ENCODE measurements at regions of chr1 and their contacts with region 1.

Region 1: DNA sequence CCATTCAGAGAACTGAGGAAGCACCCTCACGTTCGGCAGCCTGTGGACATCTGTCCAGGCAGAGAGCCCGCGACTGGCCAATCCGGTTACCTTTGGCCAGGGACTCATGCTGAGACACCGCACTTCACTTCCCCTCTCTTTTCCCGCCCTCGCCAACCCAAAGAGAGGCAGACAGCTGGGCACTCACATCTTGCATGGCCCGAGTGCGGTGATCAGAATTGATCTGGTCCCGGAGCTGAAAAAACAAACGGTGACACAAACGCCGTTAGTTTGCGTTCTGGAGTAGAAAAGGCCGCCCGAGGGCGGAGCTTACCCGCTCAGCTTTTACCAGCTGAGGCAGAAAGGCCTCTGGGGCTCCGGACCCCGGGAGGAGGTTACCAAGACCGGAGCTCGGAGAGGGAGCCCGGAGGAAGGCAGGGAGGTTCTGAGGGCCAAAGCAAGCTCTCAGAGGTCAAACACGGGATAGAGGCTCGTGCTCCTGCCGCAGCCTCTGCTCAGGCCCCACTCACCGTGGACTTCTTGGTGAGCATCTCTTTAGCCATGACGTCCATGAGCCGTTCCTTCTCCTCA is 376 bp downstream of the SF3A3 start:
- DNase-seq: no peak
- ATAC-seq: peak; percentile 48
- H3K4me3 ChIP-seq: peak overlapping the region; percentile 95
- H3K27ac ChIP-seq: peak overlapping the region; percentile 83
- H3K4me1 ChIP-seq: peaks cover 4% of the 10 kb centered on the region; the same call in 1 of the 2 replicates
- H3K27me3 ChIP-seq: no peaks in the 10 kb centered on the region
- CTCF ChIP-seq: no peak
- EP300 ChIP-seq: no peak
- POLR2A ChIP-seq: no peak
- RAD21 ChIP-seq: no peak

Region 2: GRCh38 chr1:37595440-37596319 is 393.8 kb before region 1 on chr1 and contains the start of gene GNL2:
- CTCF ChIA-PET with region 1: no interaction called
- POLR2A ChIA-PET with region 1: no interaction called
- RAD21 ChIA-PET with region 1: no interaction called
- SMC1A ChIA-PET with region 1: no interaction called
- in situ Hi-C with region 1: loop called (anchors 25 kb)
- intact Hi-C with region 1: no loop called
- DNase-seq: peak; percentile 83
- ATAC-seq: peak; percentile 99
- H3K4me3 ChIP-seq: peak within 1 kb of the TSS; percentile 77
- H3K27ac ChIP-seq: peak within 1 kb of the TSS; percentile 84
- H3K4me1 ChIP-seq: peaks cover 7% of the 10 kb centered on the region
- H3K27me3 ChIP-seq: no peaks in the 10 kb centered on the region
- CTCF ChIP-seq: no peak
- EP300 ChIP-seq: no peak
- POLR2A ChIP-seq: peak; percentile 96
- RAD21 ChIP-seq: no peak
- polyA plus RNA-seq, gene GNL2: 64.2 to 91.3 TPM

Region 3: DNA sequence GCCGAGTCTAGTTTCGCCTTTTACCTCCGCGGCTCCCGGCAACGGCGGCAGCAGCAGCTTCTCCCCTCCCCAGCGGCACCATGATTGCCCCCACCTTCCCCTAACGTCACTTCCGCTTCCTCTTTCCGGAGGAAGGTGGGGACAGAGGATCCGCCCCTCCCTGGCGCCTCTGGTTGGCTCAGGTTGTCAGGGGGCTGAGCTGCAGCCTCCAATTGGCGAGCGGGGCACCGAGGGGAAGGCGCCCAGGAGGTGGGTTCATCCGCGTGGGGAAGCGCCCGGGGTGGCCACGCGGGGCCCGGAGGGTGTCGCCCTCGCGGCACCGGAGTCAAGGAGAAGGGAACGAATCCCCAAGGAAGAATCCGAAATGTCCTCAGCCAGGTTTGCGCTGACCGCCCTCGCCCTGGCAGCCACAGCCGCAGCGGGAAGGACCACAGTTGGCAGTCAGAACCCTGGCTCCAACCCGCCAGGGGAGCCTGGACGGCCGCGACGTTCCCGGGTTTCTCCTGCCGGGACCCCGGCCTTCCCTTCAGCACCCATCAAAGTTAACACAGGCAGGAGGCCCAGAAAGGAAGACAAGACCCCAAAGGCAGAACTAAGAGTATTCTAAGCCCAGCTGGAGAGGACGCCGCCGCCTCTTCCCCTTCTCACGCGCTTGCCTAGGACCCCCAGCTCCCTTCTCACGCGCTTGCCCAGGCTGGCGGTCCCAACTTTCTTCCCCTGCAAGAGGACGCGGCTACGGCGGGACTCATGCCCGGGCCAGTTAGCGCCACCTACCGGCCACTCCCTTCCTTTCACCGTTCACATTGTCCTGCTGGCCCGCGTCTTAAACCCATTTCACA is 129.7 kb before region 1 on chr1 and contains the start of gene MTF1:
- CTCF ChIA-PET with region 1: interaction called, 11 read pairs
- POLR2A ChIA-PET with region 1: interaction called, 7 read pairs
- RAD21 ChIA-PET with region 1: interaction called, 6 read pairs
- SMC1A ChIA-PET with region 1: interaction called, 6 read pairs
- in situ Hi-C with region 1: no loop called
- intact Hi-C with region 1: no loop called
- DNase-seq: peak; percentile 84
- ATAC-seq: peak; percentile 99
- H3K4me3 ChIP-seq: peak within 1 kb of the TSS; percentile 96
- H3K27ac ChIP-seq: peak within 1 kb of the TSS; percentile 88
- H3K4me1 ChIP-seq: peaks cover 14% of the 10 kb centered on the region
- H3K27me3 ChIP-seq: no peaks in the 10 kb centered on the region
- CTCF ChIP-seq: peak; percentile 87 to 91 (median 87)
- EP300 ChIP-seq: no peak; a peak in 1 of 4 replicates
- POLR2A ChIP-seq: peak; percentile 90
- RAD21 ChIP-seq: peak; percentile 59
- polyA plus RNA-seq, gene MTF1: 2.8 to 4.4 TPM

Region 4: GRCh38 chr1:37999430-38000232 is 10.2 kb after region 1 on chr1:
- CTCF ChIA-PET with region 1: interaction called, 27 read pairs
- POLR2A ChIA-PET with region 1: interaction called, 8 read pairs
- RAD21 ChIA-PET with region 1: interaction called, 3 read pairs
- SMC1A ChIA-PET with region 1: interaction called, 17 read pairs
- in situ Hi-C with region 1: no loop called
- intact Hi-C with region 1: no loop called
- DNase-seq: no peak
- ATAC-seq: 0 out of 3 replicates have a peak, but pooled peaks have one; percentile 12
- H3K4me3 ChIP-seq: no peak overlapping the region
- H3K27ac ChIP-seq: peak overlapping the region; percentile 56
- H3K4me1 ChIP-seq: peaks cover 27% of the 10 kb centered on the region
- H3K27me3 ChIP-seq: 0 out of 4 replicates have a peak, but pooled peaks cover 0 to under 1% of the 10 kb centered on the region in 2 experiments
- CTCF ChIP-seq: no peak
- EP300 ChIP-seq: no peak
- POLR2A ChIP-seq: no peak
- RAD21 ChIP-seq: no peak

Region 5: DNA sequence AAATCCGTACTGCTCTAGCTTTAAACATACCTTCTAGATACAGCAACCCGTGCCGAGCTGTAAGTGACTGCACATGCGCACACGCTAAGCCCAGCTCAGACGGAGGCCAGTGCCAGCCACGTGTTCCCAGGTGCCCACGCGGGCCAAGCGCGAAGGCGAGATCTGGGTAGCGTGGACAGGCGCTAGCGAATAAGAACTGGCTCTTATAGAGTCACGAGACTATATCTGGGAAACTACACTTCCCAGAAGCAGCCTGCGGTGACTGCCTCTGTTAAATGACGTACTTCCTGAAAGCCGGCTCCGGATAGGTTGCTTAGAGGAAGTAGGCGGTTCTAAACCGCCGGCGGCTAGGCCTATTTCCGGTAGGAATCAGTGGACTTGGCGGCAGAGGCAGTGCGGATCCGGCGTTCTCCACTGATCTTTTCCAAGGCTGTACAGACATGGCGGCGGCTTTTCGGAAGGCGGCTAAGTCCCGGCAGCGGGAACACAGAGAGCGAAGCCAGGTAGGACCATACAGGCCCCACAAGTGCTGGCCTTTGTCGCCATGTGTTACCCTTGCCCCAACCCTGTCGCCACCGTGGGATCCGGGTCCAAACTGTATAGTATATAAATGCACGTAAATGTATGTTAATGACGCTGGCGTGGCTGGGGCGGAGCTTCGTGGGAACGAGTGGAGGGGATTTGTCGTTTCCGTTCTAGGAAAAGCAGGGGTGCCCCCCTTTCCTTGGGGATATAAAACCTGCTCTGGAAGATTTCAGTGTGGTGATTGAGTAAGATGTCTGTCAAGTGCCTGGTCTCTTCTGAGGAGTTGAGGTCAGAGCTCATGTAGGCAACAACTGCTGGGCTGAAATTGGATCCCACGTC is 23.1 kb after region 1 on chr1 and contains the start of gene UTP11:
- CTCF ChIA-PET with region 1: interaction called, 32 read pairs
- POLR2A ChIA-PET with region 1: no interaction called
- RAD21 ChIA-PET with region 1: interaction called, 5 read pairs
- SMC1A ChIA-PET with region 1: interaction called, 4 read pairs
- in situ Hi-C with region 1: no loop called
- intact Hi-C with region 1: loop called (anchors 1 kb)
- DNase-seq: peak; percentile 86
- ATAC-seq: peak; percentile 96
- H3K4me3 ChIP-seq: peak within 1 kb of the TSS; percentile 84
- H3K27ac ChIP-seq: peak within 1 kb of the TSS; percentile 84
- H3K4me1 ChIP-seq: peaks cover 8% of the 10 kb centered on the region; the same call in 1 of the 2 replicates
- H3K27me3 ChIP-seq: no peaks in the 10 kb centered on the region
- CTCF ChIP-seq: no peak
- EP300 ChIP-seq: no peak
- POLR2A ChIP-seq: peak; percentile 87
- RAD21 ChIP-seq: no peak
- polyA plus RNA-seq, gene UTP11: 96.4 to 107 TPM

Region 6: GRCh38 chr1:38018864-38019343 is 29.5 kb after region 1 on chr1:
- CTCF ChIA-PET with region 1: interaction called, 32 read pairs
- POLR2A ChIA-PET with region 1: no interaction called
- RAD21 ChIA-PET with region 1: interaction called, 5 read pairs
- SMC1A ChIA-PET with region 1: interaction called, 8 read pairs
- in situ Hi-C with region 1: no loop called
- intact Hi-C with region 1: loop called (anchors 1 kb)
- DNase-seq: no peak
- ATAC-seq: peak; percentile 71
- H3K4me3 ChIP-seq: no peak overlapping the region
- H3K27ac ChIP-seq: no peak overlapping the region
- H3K4me1 ChIP-seq: no peaks in the 10 kb centered on the region
- H3K27me3 ChIP-seq: no peaks in the 10 kb centered on the region
- CTCF ChIP-seq: peak; percentile 47 to 69 (median 54); a peak in 4 of 6 replicates
- EP300 ChIP-seq: no peak
- POLR2A ChIP-seq: no peak
- RAD21 ChIP-seq: peak; percentile 62

Region 7: DNA sequence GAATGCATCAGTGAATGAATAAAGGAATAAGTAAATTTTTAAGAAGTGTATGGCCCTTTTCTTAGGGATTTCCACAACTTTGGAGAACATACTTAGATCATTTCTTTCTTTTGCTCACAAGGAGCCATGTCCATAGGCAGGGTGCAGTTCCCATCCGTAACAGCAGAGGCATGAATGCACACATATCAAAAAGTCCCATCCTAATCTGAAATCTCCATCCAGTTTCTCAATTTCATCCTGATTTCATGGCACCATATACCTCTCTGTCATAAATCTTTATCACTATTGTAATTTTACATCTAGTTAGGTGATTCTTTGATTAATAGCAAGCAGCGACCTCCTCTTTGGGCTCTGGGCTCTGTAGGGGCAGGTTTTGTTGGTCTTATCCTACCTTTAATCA is 510.9 kb after region 1 on chr1:
- CTCF ChIA-PET with region 1: interaction called, 13 read pairs
- POLR2A ChIA-PET with region 1: no interaction called
- RAD21 ChIA-PET with region 1: no interaction called
- SMC1A ChIA-PET with region 1: no interaction called
- in situ Hi-C with region 1: no loop called
- intact Hi-C with region 1: no loop called
- DNase-seq: no peak
- ATAC-seq: peak; percentile 57; the same call in 2 of the 3 replicates
- H3K4me3 ChIP-seq: no peak overlapping the region
- H3K27ac ChIP-seq: no peak overlapping the region
- H3K4me1 ChIP-seq: peaks cover 4% of the 10 kb centered on the region
- H3K27me3 ChIP-seq: no peaks in the 10 kb centered on the region; a peak in 1 of 4 replicates
- CTCF ChIP-seq: peak in 2 of 3 experiments; percentile 53 to 58; a peak in 4 of 6 replicates
- EP300 ChIP-seq: no peak
- POLR2A ChIP-seq: no peak
- RAD21 ChIP-seq: peak; percentile 32